Activated T-helper 1 cell treated with anti-CD3 and anti-CD28 coated beads, Interleukin-12 subunit alpha, Interleukin-12 subunit beta, Interleukin-2, Interleukin-4 antibody, amounts not matched to agents 30 ng/mL and 10 ng/mL and 1 ng/mL, durations not matched to agents 14 hours and 24 hours and 36 hours (primary cell): ENCODE measurements at regions of chr5 and their contacts with region 1.

Region 1: GRCh38 chr5:149551200-149552037 is at the start of gene CSNK1A1:
- DNase-seq: peak; percentile 99
- H3K4me3 Mint-ChIP-seq: peak within 1 kb of the TSS; percentile 99
- H3K27ac Mint-ChIP-seq: peak within 1 kb of the TSS; percentile 99
- H3K4me1 Mint-ChIP-seq: peaks cover 28% of the 10 kb centered on the region
- H3K27me3 Mint-ChIP-seq: no peaks in the 10 kb centered on the region
- total RNA-seq, gene CSNK1A1: 195 and 205 TPM in 2 replicates

Region 2: GRCh38 chr5:148826053-148826738 is 725.2 kb before region 1 on chr5 and contains the start of gene ADRB2:
- intact Hi-C with region 1: loop called (anchors 10 kb)
- DNase-seq: peak; percentile 86
- H3K4me3 Mint-ChIP-seq: peak within 1 kb of the TSS; percentile 89
- H3K27ac Mint-ChIP-seq: peak within 1 kb of the TSS; percentile 75
- H3K4me1 Mint-ChIP-seq: peaks cover 34% of the 10 kb centered on the region
- H3K27me3 Mint-ChIP-seq: peaks cover 63% of the 10 kb centered on the region
- total RNA-seq, gene ADRB2: 0.83 and 0.93 TPM in 2 replicates

Region 3: DNA sequence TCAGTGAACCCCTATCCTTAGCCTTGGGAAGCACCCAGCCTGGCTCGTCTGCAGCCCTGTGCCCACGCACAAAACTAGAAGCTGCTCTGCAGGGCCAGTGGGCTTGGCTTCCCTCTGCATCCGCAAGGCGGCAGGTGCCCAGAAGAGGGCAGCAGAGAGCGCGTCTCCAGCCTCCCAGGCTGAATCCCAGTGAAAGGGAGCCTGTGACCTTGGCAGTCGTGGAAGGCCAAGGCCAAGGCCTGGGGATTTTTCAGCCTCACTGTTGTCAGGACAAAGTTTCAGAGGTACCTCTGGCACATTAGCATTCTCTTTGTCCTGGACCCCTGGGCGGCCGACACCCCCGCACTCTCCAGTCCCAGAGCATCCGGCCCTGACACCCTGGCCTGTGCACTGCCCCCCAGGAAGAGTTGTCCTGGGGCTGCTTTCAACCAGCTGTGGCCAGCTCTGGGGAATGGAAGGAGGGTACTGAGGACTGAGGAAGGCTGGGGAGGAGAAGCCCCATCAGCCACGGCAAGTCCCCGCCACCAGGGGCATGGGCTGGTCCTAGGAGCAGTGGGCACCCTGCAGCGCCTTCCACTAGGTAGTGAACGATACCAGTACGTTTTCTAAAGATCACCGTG is 108.7 kb before region 1 on chr5:
- intact Hi-C with region 1: loop called (anchors 1 kb)
- DNase-seq: peak; percentile 52
- H3K4me3 Mint-ChIP-seq: no peak overlapping the region
- H3K27ac Mint-ChIP-seq: peak overlapping the region; percentile 69
- H3K4me1 Mint-ChIP-seq: peaks cover 25% of the 10 kb centered on the region
- H3K27me3 Mint-ChIP-seq: no peaks in the 10 kb centered on the region

Region 4: GRCh38 chr5:149537374-149537975 is 13.9 kb before region 1 on chr5:
- intact Hi-C with region 1: no loop called
- DNase-seq: no peak
- H3K4me3 Mint-ChIP-seq: no peak overlapping the region
- H3K27ac Mint-ChIP-seq: no peak overlapping the region
- H3K4me1 Mint-ChIP-seq: peaks cover 42% of the 10 kb centered on the region
- H3K27me3 Mint-ChIP-seq: no peaks in the 10 kb centered on the region

Region 5: DNA sequence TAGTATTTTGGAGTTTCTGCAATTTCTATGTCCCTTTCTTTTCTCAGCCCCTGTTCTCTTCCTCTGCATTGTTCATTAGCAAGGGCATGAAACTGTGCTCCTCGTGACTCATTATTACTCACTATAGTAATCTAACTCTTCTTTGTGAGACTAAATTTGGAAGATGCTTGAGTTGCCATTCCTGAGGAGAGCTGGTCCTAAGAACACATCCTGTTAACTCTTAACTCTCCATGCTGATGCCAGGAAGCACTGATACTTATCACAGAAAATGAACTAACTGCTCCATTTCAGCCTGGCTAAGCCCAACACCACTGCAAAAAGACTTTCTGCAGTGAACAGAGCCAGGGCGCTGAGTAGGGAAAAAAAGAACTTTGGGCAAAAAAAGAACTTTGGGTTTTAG is 10.4 kb after region 1 on chr5:
- intact Hi-C with region 1: loop called (anchors 1 kb)
- DNase-seq: no peak
- H3K4me3 Mint-ChIP-seq: no peak overlapping the region
- H3K27ac Mint-ChIP-seq: no peak overlapping the region
- H3K4me1 Mint-ChIP-seq: peaks cover 18% of the 10 kb centered on the region
- H3K27me3 Mint-ChIP-seq: no peaks in the 10 kb centered on the region

Region 6: DNA sequence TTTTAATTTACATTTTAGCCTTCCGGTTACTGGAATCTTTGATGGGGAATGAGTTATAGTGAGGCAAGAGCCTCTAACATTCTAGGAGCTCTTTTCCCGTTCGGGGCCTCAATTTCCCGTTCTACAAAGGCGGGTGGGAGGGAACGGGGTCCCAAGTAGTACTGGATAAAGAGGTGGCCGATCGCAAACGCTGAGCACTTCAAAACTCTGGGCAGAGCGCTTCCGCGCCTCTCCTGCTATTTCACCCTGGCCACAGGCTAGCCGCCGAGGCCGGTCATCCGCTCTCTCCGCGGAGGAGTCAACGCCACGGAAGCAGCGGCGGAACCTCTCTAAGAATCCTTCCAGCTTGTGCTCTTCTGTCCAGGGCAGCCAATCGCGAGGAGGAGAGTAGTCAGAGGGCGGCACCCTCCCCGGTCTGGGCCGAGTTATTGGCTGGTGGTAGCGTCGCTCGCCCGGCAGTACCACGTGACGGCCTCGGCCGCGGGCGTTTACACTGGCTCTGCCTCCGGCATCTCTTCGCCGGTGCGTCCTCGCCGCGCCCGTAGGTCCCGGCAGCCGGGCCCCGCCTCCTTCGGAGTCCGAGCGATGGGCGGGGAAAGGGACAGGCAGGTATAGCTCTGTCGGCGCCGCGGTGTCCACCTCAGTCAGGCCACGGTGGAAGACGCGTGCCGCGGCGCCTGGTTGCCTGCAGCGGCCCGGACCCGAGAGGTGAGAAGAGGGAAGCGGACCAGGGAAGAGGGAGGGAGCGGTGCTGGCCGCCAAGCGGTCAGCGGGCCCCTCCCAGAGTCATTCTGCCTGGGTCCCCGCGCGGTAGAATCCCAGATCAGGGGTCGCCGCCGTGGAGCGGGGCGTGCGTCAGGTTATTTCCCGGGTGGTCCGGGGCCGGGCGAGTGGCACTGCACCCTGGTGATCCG is 409.1 kb after region 1 on chr5 and contains the start of gene SLC26A2:
- intact Hi-C with region 1: loop called (anchors 1 kb)
- DNase-seq: peak; percentile 94
- H3K4me3 Mint-ChIP-seq: peak within 1 kb of the TSS; percentile 95
- H3K27ac Mint-ChIP-seq: peak within 1 kb of the TSS; percentile 100
- H3K4me1 Mint-ChIP-seq: peaks cover 37% of the 10 kb centered on the region
- H3K27me3 Mint-ChIP-seq: no peaks in the 10 kb centered on the region
- total RNA-seq, gene SLC26A2: 9.3 and 9.5 TPM in 2 replicates

Region 7: DNA sequence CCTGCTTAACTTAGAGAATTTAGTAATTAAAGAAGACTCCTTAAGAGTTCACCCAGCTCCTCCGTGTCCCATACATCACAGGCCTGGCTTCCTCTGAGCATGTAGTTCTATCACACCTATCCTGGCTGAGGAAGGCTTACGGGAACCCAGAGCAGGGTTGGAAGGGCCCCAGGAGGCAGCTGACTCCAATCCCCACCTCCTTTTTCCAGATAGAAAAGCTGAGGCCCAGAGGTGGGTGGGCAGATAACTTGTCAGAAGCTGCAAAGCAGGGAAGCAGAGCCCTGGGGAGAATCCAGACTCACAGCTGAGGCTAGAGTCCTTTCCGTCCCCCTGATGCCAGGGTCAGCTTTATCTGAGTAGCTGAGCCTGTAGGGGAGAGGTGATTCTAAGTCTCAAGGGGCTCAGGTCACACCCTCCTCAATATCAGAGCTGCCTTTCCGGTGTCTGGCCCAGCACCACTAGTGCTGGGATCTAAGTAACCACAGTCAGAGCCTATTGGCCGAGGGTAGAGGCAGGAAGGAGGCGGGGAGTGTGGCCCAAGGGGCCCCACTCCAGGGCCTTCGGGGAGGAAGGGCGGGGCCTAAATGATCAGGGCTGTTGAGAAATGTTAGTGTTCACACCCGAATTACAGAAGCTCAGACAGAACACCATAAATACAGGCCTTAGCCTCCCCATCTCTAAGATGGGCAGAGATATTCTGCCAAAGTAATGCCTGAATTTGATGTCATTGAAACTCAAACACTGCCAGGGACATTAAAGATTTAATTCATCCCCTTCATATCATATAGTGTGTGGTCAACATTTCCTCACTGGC is 1662.6 kb after region 1 on chr5:
- intact Hi-C with region 1: loop called (anchors 10 kb)
- DNase-seq: peak; percentile 83
- H3K4me3 Mint-ChIP-seq: peak overlapping the region; percentile 87
- H3K27ac Mint-ChIP-seq: peak overlapping the region; percentile 93
- H3K4me1 Mint-ChIP-seq: peaks cover 81% of the 10 kb centered on the region
- H3K27me3 Mint-ChIP-seq: no peaks in the 10 kb centered on the region